Naive thymus-derived CD4-positive, alpha-beta T cell (primary cell): ENCODE measurements at regions of chr4 and their contacts with region 1.

Region 1: DNA sequence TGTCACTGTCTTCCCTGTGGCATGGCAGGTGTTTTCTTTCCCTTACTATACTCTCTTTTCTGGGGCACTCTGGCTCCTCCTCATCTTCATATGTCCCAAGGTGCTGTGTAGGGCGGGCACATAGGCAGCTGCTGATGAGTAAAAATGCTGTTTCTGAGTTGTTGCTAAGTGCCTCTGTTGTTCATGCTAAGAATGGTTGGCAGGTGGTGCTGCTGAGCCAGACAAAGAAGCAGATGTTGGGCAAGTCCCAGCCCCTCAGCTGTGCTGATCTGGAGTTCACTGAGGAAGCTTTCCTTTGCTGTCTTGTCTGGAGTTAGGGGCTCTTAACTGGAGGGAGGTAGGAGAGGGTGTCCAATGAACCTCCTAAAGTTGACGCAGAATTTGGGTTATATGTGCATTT is 40.6 kb downstream of the HADH start:
- DNase-seq: peak; percentile 30 to 85 (median 78)
- ATAC-seq: peak; percentile 91
- H3K4me3 ChIP-seq: no peak overlapping the region
- H3K4me3 Mint-ChIP-seq: peak overlapping the region; percentile 70 to 84 (median 76)
- H3K27ac ChIP-seq: peak overlapping the region; percentile 61
- H3K27ac Mint-ChIP-seq: peak overlapping the region; percentile 86 to 96 (median 94)
- H3K4me1 ChIP-seq: peaks cover 9 to 53% of the 10 kb centered on the region in 2 donors
- H3K4me1 Mint-ChIP-seq: peaks cover 28 to 77% (median 66%) of the 10 kb centered on the region in 7 donors
- H3K27me3 ChIP-seq: no peaks in the 10 kb centered on the region
- H3K27me3 Mint-ChIP-seq: no peaks in the 10 kb centered on the region

Region 2: DNA sequence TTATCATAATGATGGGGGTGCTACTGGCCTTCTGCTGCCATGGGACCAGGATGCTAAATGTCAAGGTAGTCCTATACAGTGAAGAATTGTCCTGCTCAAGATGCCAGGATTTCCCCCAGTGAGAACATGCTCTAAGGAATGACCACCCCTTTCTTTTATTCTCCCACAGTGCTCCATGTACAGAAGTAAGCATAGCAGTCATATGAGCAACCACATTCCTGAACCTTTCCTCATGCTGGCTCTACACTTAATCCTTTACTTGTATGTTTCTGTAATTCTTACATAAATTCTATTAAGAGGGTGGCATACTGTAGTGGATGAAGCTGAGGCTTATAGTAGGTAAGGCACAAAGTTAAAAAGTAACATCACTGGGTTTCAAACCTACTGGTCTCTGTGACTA is 78.8 kb before region 1 on chr4:
- CTCF ChIA-PET with region 1: no interaction called
- POLR2A ChIA-PET with region 1: no interaction called
- intact Hi-C with region 1: no loop called
- DNase-seq: no peak
- ATAC-seq: no peak
- H3K4me3 ChIP-seq: no peak overlapping the region
- H3K4me3 Mint-ChIP-seq: no peak overlapping the region
- H3K27ac ChIP-seq: no peak overlapping the region
- H3K27ac Mint-ChIP-seq: peak overlapping the region in 1 of 9 donors; percentile 46
- H3K4me1 ChIP-seq: no peaks in the 10 kb centered on the region
- H3K4me1 Mint-ChIP-seq: no peaks in the 10 kb centered on the region
- H3K27me3 ChIP-seq: no peaks in the 10 kb centered on the region
- H3K27me3 Mint-ChIP-seq: peaks cover 0 to 5% (median 0%) of the 10 kb centered on the region in 5 donors

Region 3: DNA sequence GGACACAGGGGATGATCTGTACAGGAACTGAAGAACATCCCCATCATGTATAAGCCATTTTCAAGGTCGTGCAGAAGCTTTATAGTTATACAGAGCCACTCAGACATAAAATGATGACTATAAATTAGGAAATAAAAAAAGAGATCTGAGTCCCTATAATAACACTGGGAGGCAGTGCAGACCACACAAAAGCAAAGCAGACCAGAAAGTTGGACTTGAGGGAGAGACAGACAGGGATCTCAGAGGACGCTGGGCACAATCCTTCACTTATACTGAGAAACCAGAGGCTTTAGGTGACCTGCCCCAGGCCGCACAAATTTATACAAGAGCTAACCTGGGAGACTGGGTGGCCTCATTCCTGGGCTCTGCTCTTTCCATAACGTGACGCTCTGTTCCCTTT is 29.8 kb after region 1 on chr4:
- CTCF ChIA-PET with region 1: interaction called, 21 read pairs
- POLR2A ChIA-PET with region 1: interaction called, 16 read pairs
- intact Hi-C with region 1: no loop called
- DNase-seq: peak in 1 of 9 donors; percentile 17
- ATAC-seq: no peak
- H3K4me3 ChIP-seq: no peak overlapping the region
- H3K4me3 Mint-ChIP-seq: peak overlapping the region in 5 of 10 donors; percentile 13 to 84 (median 64)
- H3K27ac ChIP-seq: peak overlapping the region; percentile 66
- H3K27ac Mint-ChIP-seq: peak overlapping the region in 8 of 9 donors; percentile 78 to 99 (median 90)
- H3K4me1 ChIP-seq: peaks cover 0 to 87% of the 10 kb centered on the region in 2 donors
- H3K4me1 Mint-ChIP-seq: peaks cover 33 to 99% (median 92%) of the 10 kb centered on the region in 7 donors
- H3K27me3 ChIP-seq: no peaks in the 10 kb centered on the region
- H3K27me3 Mint-ChIP-seq: no peaks in the 10 kb centered on the region

Region 4: GRCh38 chr4:108155373-108155772 is 125.0 kb after region 1 on chr4:
- CTCF ChIA-PET with region 1: interaction called, 22 read pairs
- POLR2A ChIA-PET with region 1: interaction called, 26 read pairs
- intact Hi-C with region 1: no loop called
- DNase-seq: peak in 2 of 9 donors; percentile 38 to 65
- ATAC-seq: peak; percentile 65
- H3K4me3 ChIP-seq: peak overlapping the region; percentile 14
- H3K4me3 Mint-ChIP-seq: peak overlapping the region; percentile 83 to 100 (median 97)
- H3K27ac ChIP-seq: peak overlapping the region; percentile 87
- H3K27ac Mint-ChIP-seq: peak overlapping the region; percentile 66 to 97 (median 92)
- H3K4me1 ChIP-seq: peaks cover 35 to 72% of the 10 kb centered on the region in 2 donors
- H3K4me1 Mint-ChIP-seq: peaks cover 31 to 99% (median 80%) of the 10 kb centered on the region in 7 donors
- H3K27me3 ChIP-seq: no peaks in the 10 kb centered on the region
- H3K27me3 Mint-ChIP-seq: no peaks in the 10 kb centered on the region

Region 5: GRCh38 chr4:108188770-108189169 is 158.4 kb after region 1 on chr4:
- CTCF ChIA-PET with region 1: interaction called, 11 read pairs
- POLR2A ChIA-PET with region 1: interaction called, 10 read pairs
- intact Hi-C with region 1: no loop called
- DNase-seq: no peak
- ATAC-seq: no peak
- H3K4me3 ChIP-seq: no peak overlapping the region
- H3K4me3 Mint-ChIP-seq: no peak overlapping the region
- H3K27ac ChIP-seq: no peak overlapping the region
- H3K27ac Mint-ChIP-seq: peak overlapping the region in 2 of 9 donors; percentile 7 to 40
- H3K4me1 ChIP-seq: peaks cover 0 to 8% of the 10 kb centered on the region in 2 donors
- H3K4me1 Mint-ChIP-seq: peaks cover 11 to 63% (median 41%) of the 10 kb centered on the region in 7 donors
- H3K27me3 ChIP-seq: no peaks in the 10 kb centered on the region
- H3K27me3 Mint-ChIP-seq: peaks cover 0 to 4% (median 0%) of the 10 kb centered on the region in 5 donors

Region 6: DNA sequence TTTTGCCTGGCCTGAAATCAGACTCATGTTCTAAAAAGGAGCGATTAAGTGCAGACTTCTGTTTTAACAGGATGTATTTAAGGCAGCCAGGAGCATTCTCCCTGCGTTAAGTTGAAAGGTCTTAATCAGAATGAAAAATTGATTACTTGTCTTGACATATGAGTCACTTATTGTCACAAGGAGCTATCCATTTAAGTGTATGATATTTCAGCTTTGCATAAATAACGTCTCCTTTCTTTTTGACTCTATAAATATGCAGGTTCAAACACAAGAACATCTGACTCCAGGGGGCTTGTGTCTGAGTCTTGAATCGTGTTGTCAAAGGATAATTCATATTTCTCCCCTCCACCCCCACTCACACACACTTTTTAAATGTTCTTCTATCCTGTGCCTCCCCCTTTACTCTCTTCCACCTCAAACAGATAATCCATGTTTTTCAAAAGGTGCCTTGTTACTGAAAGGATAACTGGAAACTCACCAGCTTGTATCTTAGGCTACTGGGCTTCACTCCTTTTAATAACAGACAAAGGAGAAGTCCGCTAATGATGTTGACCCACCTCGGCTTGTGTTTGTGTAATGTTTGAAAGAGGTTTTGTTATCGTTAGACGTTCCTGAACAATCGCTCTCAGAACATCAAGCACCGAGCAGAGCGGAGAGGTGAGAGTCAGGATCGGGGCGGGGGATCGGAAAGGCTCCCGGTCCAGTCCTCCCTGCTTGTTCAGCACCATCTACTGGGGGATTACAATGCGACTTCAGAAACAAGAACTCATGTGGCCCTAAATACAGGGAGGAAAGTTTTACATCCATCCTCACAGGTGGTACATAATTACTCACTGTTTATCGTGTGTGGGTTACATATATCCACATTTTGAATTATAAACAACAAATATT is 482.5 kb after region 1 on chr4:
- CTCF ChIA-PET with region 1: interaction called, 9 read pairs
- POLR2A ChIA-PET with region 1: interaction called, 3 read pairs
- intact Hi-C with region 1: loop called (anchors 1 kb)
- DNase-seq: peak in 7 of 9 donors; percentile 42 to 68 (median 58)
- ATAC-seq: peak; percentile 82
- H3K4me3 ChIP-seq: peak overlapping the region; percentile 6
- H3K4me3 Mint-ChIP-seq: peak overlapping the region; percentile 72 to 87 (median 80)
- H3K27ac ChIP-seq: no peak overlapping the region
- H3K27ac Mint-ChIP-seq: peak overlapping the region in 7 of 9 donors; percentile 33 to 79 (median 71)
- H3K4me1 ChIP-seq: peaks cover 0 to 10% of the 10 kb centered on the region in 2 donors
- H3K4me1 Mint-ChIP-seq: peaks cover 9 to 37% (median 23%) of the 10 kb centered on the region in 7 donors
- H3K27me3 ChIP-seq: no peaks in the 10 kb centered on the region
- H3K27me3 Mint-ChIP-seq: peaks cover 0 to 11% (median 0%) of the 10 kb centered on the region in 5 donors